ENCODE measurements at regions of chr15 and their contacts with region 1.

Region 1: DNA sequence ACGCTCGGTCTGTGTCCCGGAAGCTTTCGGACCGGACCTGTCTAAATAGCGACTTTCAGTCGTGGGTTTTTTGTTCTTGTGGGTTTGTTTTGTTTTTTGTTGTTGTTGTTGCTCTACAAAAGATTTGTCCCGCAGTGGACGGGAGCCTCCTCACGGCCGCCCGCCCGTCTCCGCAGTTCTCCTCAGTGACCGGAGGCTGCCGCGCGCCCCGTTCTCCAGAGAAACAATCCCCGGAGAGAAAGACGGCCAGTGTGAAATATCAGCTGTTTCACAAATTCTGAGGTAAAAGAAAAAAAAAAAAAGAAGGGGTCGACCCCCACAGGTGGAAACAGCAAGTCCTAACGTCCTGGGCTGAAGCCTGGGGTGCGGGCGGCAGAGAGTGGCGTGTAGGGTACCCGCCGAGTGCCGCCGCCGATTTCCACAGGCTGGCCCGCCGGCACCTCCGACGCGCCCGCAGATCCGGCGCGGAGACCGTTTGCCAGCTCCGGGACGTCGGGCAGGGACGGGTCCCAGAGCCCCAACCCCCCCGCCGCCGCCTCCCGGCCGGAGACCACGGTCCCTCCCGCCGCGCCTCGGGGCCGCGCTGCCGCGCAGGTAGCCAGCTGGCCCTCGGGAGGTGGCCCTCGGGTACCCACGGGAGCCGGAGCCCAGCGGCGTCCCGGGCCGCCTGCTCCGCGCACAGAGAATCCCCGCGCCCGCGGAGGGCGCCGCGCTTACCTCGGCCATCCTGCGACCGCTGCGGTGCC is 478 bp downstream of the BNC1 start:
- DNase-seq: peak in 2 of 5 donors; percentile 5 to 21
- ATAC-seq: peak in 1 of 4 donors; percentile 39
- H3K4me3 ChIP-seq: peak overlapping the region; percentile 42 to 64 (median 56)
- H3K27ac ChIP-seq: no peak overlapping the region
- H3K4me1 ChIP-seq: peaks cover 0 to 19% (median 6%) of the 10 kb centered on the region in 12 donors
- H3K27me3 ChIP-seq: peaks cover 6 to 80% (median 46%) of the 10 kb centered on the region in 9 donors
- CTCF ChIP-seq: no peak
- POLR2A ChIP-seq: no peak

Region 2: GRCh38 chr15:83225449-83225848 is 58.5 kb before region 1 on chr15:
- intact Hi-C with region 1: no loop called
- DNase-seq: no peak
- ATAC-seq: no peak
- H3K4me3 ChIP-seq: peak overlapping the region in 1 of 12 donors; percentile 23
- H3K27ac ChIP-seq: no peak overlapping the region
- H3K4me1 ChIP-seq: no peaks in the 10 kb centered on the region
- H3K27me3 ChIP-seq: no peaks in the 10 kb centered on the region
- CTCF ChIP-seq: no peak
- POLR2A ChIP-seq: no peak

Region 3: DNA sequence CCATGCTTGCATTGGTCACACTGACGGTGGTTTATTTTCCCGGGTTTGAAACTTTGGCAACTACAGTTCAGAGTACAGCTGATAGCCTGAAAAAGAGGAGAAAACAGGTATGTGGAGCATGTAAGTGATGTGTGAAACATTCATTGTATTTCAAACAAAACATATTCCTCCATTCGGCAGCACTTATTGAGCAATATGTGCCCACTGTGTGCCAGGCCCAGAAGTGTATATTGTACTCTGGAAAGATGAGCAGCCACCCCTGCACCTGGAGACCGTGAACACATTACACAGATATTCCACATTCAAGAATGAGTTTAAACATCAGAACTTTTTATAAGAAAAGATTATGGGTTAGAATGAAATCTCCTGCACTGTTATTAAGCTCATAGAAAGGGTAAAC is 15.8 kb before region 1 on chr15:
- intact Hi-C with region 1: loop called in 1 of 10 experiments (anchors 1 kb)
- DNase-seq: no peak
- ATAC-seq: no peak
- H3K4me3 ChIP-seq: no peak overlapping the region
- H3K27ac ChIP-seq: no peak overlapping the region
- H3K4me1 ChIP-seq: no peaks in the 10 kb centered on the region
- H3K27me3 ChIP-seq: peaks cover 0 to 8% (median 0%) of the 10 kb centered on the region in 9 donors
- CTCF ChIP-seq: no peak
- POLR2A ChIP-seq: no peak

Region 4: DNA sequence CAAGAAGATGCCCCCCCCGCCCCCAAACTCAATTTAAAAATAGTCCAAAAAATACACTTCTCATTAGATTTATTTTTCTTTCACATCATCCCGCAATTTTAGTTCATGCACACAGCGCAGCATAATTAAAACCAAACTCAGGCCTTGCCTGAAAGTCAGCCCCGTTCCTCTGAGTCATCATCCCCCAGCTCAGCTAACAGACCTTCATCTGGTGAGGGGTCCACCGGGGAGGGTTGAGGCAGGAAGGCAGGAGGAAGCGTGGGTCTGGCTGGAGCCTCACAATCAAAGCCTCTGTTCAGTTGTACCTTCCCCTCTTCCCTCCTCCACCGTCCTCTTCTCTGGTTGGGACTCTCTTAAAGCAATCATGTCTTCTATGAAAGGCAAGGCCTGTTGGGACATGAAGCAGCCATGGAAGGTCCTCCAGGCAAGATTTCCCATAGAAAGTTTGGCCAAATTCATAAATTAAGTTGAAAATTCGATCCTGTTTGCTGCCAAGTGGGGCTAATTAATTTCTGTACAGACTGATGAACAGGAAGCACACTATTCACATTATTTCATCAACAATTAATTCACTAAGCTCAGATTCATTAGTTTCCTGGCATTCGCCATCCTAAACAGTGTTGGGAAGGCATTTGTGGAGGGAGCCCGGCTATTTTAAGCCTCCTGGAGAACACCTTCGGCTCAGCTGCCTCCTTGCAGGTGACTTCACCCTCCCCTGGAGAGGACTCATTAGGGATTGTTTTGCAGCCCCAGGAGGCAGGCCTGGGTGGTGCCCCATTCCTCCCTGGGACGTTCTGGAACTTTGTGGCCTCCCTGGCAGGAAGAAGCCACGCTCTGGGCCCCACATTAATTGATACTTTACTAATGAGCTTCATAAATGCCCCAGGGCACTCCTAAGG is 72.8 kb after region 1 on chr15:
- intact Hi-C with region 1: no loop called
- DNase-seq: no peak
- ATAC-seq: no peak
- H3K4me3 ChIP-seq: no peak overlapping the region
- H3K27ac ChIP-seq: no peak overlapping the region
- H3K4me1 ChIP-seq: no peaks in the 10 kb centered on the region
- H3K27me3 ChIP-seq: peaks cover 0 to 16% (median 0%) of the 10 kb centered on the region in 9 donors
- CTCF ChIP-seq: no peak
- POLR2A ChIP-seq: no peak

Region 5: DNA sequence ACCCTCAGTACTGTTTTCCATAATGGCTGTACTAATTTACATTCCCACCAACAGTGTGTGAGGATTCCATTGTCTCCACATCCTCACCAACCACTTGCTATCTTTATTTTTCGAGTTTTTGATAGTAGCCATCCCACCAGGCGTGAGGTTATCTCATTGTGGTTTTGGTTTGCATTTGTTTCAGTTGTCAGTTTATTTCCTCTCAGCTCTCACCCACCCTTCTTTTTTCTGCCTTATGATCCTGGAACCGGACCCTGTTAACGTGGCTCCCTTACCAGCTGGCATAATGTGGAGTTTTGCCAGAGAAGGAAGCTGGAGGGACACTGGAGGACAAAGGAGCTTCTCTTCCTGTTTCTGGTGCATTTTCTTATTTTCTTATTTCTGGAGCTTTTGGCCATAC is 138.1 kb after region 1 on chr15:
- intact Hi-C with region 1: no loop called
- DNase-seq: no peak
- ATAC-seq: no peak
- H3K4me3 ChIP-seq: no peak overlapping the region
- H3K27ac ChIP-seq: no peak overlapping the region
- H3K4me1 ChIP-seq: no peaks in the 10 kb centered on the region
- H3K27me3 ChIP-seq: peaks cover 0 to 20% (median 0%) of the 10 kb centered on the region in 9 donors
- CTCF ChIP-seq: no peak
- POLR2A ChIP-seq: no peak

Measured in heart left ventricle (tissue), 16 donors.